Activated CD4-positive, alpha-beta T cell treated with anti-CD3 and anti-CD28 coated beads for 36 hours (primary cell): ENCODE measurements at regions of chr15 and their contacts with region 1.

Region 1: GRCh38 chr15:41401904-41402267 is 410 bp downstream of the NDUFAF1 start:
- DNase-seq: no peak
- ATAC-seq: no peak
- H3K4me3 Mint-ChIP-seq: peak overlapping the region; percentile 94
- H3K27ac Mint-ChIP-seq: peak overlapping the region; percentile 92
- H3K4me1 Mint-ChIP-seq: peaks cover 13% of the 10 kb centered on the region
- H3K27me3 Mint-ChIP-seq: no peaks in the 10 kb centered on the region

Region 2: DNA sequence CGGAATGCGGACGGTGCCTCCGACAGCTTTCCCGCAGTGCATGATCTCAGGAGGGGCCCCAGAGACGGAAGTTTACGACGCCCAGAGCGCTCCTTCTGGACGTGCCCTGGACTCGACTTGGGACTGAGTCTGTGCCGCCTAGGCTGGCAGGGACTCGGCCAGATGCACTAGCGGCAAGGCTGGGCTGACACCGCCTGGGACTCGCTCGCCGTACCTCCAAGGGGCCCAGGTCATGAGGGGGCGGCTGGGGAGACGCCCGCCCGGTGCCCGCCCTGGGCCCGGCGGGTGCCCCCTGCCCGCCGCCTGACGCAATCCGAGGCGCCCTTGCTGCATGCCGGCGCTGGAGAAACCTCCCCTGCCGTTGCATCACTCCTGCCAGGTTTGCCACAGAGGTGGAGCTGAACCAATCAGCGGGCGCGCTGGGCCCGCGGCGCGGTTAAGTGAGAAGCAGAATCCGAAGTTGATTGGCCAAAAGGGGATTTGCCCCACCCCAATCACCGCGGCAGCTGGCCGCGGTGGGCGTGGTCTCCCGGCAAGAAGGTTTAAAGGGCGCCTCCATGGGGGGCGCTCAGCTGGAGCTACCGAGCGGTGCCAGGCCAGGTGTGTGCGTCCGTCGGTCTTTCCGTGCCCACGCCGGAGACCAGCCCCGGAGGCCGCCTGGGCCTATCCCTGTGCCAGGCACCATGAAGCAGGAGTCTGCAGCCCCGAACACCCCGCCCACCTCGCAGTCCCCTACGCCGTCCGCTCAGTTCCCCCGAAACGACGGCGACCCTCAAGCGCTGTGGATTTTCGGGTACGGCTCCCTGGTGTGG is 448.8 kb before region 1 on chr15 and contains the start of gene CHAC1:
- CTCF ChIA-PET with region 1: no interaction called
- POLR2A ChIA-PET with region 1: no interaction called
- intact Hi-C with region 1: loop called in 1 of 2 experiments (anchors 1 kb)
- DNase-seq: peak; percentile 99
- ATAC-seq: peak; percentile 92
- H3K4me3 Mint-ChIP-seq: peak within 1 kb of the TSS; percentile 93
- H3K27ac Mint-ChIP-seq: peak within 1 kb of the TSS; percentile 97
- H3K4me1 Mint-ChIP-seq: peaks cover 25% of the 10 kb centered on the region
- H3K27me3 Mint-ChIP-seq: peaks cover 2% of the 10 kb centered on the region
- total RNA-seq, gene CHAC1: 31.1 to 32.2 TPM

Region 3: DNA sequence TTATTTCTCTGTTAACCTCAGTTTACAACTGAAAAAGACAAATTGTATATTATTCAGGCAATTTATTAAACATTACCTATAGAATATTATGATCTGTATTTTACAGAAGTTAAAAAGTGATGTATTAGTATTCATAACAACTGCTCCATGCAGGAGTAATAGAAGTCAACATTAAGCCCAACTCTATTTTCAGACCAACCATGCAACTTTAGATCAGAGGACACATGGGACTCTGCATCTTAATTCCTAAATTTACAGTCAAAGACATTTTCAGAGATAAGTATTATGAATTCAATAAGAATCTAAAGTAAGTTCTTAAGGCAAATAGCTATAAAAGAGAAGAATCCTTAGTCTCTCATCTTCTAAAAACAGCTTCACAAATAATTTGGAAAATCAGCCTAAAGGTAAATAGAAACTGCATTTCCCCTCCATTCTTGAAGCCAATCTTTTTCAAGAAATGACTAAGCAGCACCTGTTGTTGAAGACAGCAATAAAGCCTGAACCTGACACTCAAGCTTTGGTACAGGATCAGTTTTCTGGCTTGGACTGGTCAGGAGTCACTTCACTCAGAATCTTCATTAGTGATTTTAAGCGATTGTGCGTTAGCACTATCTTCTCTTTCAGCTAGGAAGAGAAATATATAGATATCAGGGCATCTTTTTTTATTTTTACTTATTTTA is 92.5 kb before region 1 on chr15:
- CTCF ChIA-PET with region 1: no interaction called
- POLR2A ChIA-PET with region 1: no interaction called
- intact Hi-C with region 1: no loop called
- DNase-seq: no peak
- ATAC-seq: no peak
- H3K4me3 Mint-ChIP-seq: no peak overlapping the region
- H3K27ac Mint-ChIP-seq: no peak overlapping the region
- H3K4me1 Mint-ChIP-seq: no peaks in the 10 kb centered on the region
- H3K27me3 Mint-ChIP-seq: no peaks in the 10 kb centered on the region

Region 4: DNA sequence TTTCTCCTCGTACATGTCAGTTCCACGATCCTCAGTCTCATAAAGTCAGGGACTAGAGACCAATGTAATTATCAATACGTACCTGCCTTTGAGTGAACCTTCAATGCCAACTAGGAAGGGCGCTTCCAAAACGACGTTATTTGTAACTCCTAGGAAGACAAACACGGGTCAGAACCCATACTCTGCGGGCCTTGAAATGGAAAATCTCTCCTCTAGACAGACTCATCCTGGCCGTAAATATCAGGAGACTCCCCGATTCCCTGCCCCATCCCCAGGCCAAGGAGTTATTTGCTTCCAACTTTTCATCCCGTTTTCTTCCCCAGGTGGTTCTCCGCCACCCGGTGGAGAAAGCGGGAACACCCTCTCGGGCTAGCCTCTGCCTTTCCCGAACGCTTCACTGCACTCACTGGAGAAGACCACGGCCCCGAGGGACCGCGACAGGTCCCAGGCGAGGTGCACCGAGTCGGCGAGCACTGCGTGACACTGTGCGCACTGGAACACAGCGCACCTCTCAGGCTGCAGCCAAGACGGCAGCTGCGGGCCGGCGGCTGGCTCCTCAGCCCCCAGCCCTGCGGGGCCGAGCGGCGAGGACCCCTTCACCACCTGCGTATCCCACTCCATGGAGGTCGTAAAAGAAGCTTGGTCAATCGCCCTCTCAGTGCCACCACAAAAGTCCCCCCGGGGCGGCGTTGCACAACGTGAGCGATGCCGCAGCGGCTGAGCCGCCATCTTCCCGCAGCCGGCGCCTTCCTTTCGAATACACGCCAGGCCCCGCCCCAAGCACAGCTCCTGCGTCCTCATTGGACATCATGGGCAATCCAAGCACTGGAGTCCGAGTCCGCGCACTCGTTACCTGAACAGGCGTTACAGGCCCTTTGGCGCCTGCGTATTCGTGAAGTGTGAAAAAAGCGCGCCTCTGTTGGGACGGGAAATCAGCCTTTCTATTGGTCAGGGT is 69.8 kb before region 1 on chr15 and contains the start of gene OIP5:
- CTCF ChIA-PET with region 1: no interaction called
- POLR2A ChIA-PET with region 1: no interaction called
- intact Hi-C with region 1: loop called in 1 of 2 experiments (anchors 1 kb)
- DNase-seq: peak; percentile 99
- ATAC-seq: peak; percentile 98
- H3K4me3 Mint-ChIP-seq: peak within 1 kb of the TSS; percentile 91
- H3K27ac Mint-ChIP-seq: peak within 1 kb of the TSS; percentile 92
- H3K4me1 Mint-ChIP-seq: peaks cover 26% of the 10 kb centered on the region
- H3K27me3 Mint-ChIP-seq: no peaks in the 10 kb centered on the region
- total RNA-seq, gene OIP5: 11.5 to 14.0 TPM

Region 5: DNA sequence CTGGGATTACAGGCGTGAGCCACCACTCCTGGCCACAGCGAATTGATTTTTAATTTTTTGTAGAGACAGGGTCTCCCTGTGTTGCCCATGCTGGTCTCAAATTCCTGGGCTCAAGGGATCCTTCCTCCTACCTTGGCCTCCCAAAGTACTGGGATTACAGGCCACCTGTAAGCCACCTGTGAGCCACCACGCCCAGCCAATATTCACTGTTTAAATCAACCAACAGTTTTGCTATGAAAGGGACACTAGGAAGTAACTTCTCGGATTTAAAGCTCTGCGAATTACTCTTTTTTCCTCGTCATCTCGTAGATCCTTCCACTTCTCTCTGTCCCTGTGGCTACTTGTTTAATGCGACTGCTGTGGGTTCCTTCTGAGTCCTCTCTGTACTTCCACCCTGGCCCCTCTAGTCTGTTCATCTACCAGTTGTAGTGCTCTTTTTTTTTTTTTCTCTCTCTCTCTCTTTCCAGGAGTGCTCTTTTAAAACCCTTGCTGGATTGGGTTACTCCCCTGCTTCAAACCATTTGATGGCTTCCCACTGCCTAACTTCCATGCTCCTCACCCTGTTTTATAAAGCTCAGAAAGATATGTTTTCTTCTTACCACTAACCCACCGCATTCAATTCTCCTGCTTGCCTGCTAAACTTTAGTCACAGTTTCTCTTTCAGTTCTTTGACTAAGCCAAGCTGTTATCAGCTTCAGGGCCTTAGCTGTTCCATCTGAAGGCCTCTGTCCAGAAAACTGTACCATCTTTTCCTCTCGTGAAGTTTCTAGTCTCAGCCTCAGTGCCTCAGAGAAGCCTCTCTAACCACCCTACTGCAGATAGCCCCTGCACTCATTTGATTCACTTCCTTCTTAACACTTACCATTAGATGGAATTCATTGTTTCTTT is 27.4 kb after region 1 on chr15:
- CTCF ChIA-PET with region 1: no interaction called
- POLR2A ChIA-PET with region 1: no interaction called
- intact Hi-C with region 1: no loop called
- DNase-seq: peak; percentile 20
- ATAC-seq: peak; percentile 91
- H3K4me3 Mint-ChIP-seq: peak overlapping the region; percentile 7
- H3K27ac Mint-ChIP-seq: peak overlapping the region; percentile 91
- H3K4me1 Mint-ChIP-seq: peaks cover 22% of the 10 kb centered on the region
- H3K27me3 Mint-ChIP-seq: no peaks in the 10 kb centered on the region

Region 6: DNA sequence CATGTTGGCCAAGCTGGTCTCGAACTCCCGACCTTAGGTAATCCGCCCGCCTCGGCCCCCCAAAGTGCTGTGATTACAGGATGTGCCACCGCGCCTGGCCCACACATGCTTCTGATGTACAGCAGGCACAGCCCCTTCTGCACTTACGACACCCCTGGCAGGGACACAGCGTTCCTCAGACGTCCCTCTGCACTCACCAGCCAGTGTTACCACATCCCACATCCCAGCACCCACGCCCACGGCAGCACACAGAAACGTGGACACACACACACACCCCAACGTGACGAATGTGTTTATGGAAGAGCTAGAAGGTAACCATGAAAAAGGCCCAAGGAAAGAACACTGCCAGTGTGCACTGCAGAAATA is 142.7 kb after region 1 on chr15:
- CTCF ChIA-PET with region 1: no interaction called
- POLR2A ChIA-PET with region 1: no interaction called
- intact Hi-C with region 1: loop called in 1 of 2 experiments (anchors 1 kb)
- DNase-seq: peak; percentile 21
- ATAC-seq: no peak
- H3K4me3 Mint-ChIP-seq: peak overlapping the region; percentile 95
- H3K27ac Mint-ChIP-seq: peak overlapping the region; percentile 91
- H3K4me1 Mint-ChIP-seq: peaks cover 12% of the 10 kb centered on the region
- H3K27me3 Mint-ChIP-seq: no peaks in the 10 kb centered on the region